ENCODE measurements at regions of chr12 and their contacts with region 1.

Region 1: GRCh38 chr12:65556681-65557437 is 267.4 kb upstream of the HMGA2 start:
- DNase-seq: peak; percentile 94
- H3K4me3 ChIP-seq: no peak overlapping the region
- H3K27ac ChIP-seq: peak overlapping the region; percentile 77
- H3K4me1 ChIP-seq: peaks cover 26% of the 10 kb centered on the region
- H3K27me3 ChIP-seq: no peaks in the 10 kb centered on the region
- CTCF ChIP-seq: peak; percentile 94 to 98

Region 2: DNA sequence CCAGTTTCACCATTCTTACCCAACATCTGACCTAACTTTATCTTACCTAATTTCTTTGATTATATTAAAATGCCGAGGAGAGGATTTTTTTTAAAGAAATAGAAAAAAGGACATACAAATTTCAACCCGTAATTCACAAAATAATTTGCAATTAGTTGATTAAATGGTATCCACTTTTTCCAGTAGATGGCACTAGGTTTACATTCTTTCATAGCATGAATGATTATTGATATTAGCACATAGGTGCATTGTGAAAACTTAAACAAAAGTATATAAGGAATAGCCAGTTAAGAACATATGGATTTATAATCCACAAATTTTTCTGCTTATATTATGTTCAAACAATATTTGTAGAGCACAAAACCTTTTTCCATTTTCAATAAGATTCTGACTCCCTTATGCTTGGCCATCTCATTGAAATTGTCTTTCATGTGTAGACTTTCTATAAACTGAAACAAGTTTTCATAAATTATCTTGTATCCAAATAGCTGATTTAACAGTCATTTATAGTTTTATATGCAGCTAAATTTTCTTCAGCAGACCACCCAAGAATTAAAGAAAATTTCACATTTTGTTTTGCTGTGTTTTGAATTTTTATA is 243.0 kb before region 1 on chr12:
- CTCF ChIA-PET with region 1: no interaction called
- dilution Hi-C with region 1: no loop called
- in situ Hi-C with region 1: no loop called
- intact Hi-C with region 1: loop called (anchors 1 kb)
- DNase-seq: peak; percentile 19
- H3K4me3 ChIP-seq: no peak overlapping the region
- H3K27ac ChIP-seq: peak overlapping the region; percentile 2
- H3K4me1 ChIP-seq: peaks cover 3% of the 10 kb centered on the region
- H3K27me3 ChIP-seq: no peaks in the 10 kb centered on the region
- CTCF ChIP-seq: peak; percentile 59 to 67

Region 3: GRCh38 chr12:65584016-65584415 is 27.2 kb after region 1 on chr12:
- CTCF ChIA-PET with region 1: no interaction called
- dilution Hi-C with region 1: no loop called
- in situ Hi-C with region 1: no loop called
- intact Hi-C with region 1: no loop called
- DNase-seq: no peak
- H3K4me3 ChIP-seq: no peak overlapping the region
- H3K27ac ChIP-seq: no peak overlapping the region
- H3K4me1 ChIP-seq: peaks cover 9% of the 10 kb centered on the region
- H3K27me3 ChIP-seq: no peaks in the 10 kb centered on the region
- CTCF ChIP-seq: no peak

Region 4: DNA sequence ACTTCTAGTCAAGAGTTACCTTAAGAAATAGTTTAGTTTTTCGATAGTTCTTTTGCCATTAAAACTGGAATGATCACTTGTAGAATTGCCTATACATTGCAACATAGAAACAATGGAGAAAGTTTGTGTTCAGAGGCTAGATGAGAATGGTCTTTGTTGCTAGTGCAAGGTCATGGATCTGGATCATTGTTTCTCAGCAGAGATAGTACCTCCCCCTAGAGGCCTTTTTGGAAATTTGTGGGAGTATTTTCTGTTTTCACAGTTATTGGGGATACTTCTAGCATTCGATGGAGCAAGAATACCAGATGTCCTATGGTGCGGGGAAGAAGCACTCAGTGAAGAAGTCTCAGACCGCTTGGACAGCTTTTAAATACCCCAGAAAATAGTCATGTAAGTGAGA is 128.7 kb after region 1 on chr12:
- CTCF ChIA-PET with region 1: no interaction called
- dilution Hi-C with region 1: no loop called
- in situ Hi-C with region 1: no loop called
- intact Hi-C with region 1: loop called (anchors 1 kb)
- DNase-seq: peak; percentile 48
- H3K4me3 ChIP-seq: no peak overlapping the region
- H3K27ac ChIP-seq: no peak overlapping the region
- H3K4me1 ChIP-seq: peaks cover 8% of the 10 kb centered on the region
- H3K27me3 ChIP-seq: no peaks in the 10 kb centered on the region
- CTCF ChIP-seq: peak; percentile 53 to 68

Region 5: DNA sequence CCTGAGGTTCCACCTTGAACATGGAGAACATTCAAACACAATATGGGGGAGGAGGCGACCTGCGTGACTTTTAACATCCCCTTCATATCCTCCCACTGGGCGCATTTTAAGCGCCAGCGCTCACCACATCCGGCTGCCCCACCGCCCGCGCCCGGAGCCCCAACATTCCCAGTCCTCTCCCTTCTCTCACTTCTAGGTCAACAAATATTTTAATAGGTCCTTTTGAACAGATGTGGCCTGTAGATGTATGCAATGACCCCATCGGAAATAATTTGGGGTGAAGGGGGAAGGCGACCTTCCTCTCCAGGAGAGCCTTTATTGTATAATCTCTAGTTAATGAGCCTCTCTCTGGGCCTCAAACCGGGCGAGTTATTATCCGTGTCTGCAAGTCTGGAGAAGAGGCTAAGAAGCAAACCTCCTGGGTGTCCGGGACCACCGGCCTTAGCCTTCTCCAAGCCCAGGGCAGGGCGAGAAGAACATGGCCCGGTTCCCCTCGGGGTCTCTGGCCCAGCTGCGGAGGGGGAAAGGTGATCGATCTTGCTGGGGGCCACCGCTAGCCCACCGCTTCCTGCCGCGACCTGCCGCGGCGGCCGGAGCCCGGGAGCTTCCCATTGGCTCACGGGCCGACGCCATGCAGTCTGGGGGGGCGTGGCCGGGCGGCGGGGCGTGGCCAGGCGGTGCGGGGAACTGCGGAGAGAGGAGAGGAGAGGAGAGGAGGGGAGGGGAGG is 184.2 kb after region 1 on chr12:
- CTCF ChIA-PET with region 1: no interaction called
- dilution Hi-C with region 1: no loop called
- in situ Hi-C with region 1: no loop called
- intact Hi-C with region 1: loop called (anchors 2 kb)
- DNase-seq: peak; percentile 73
- H3K4me3 ChIP-seq: peak overlapping the region; percentile 54 to 90 (median 77)
- H3K27ac ChIP-seq: peak overlapping the region; percentile 49
- H3K4me1 ChIP-seq: peaks cover 14% of the 10 kb centered on the region
- H3K27me3 ChIP-seq: no peaks in the 10 kb centered on the region
- CTCF ChIP-seq: no peak

Region 6: DNA sequence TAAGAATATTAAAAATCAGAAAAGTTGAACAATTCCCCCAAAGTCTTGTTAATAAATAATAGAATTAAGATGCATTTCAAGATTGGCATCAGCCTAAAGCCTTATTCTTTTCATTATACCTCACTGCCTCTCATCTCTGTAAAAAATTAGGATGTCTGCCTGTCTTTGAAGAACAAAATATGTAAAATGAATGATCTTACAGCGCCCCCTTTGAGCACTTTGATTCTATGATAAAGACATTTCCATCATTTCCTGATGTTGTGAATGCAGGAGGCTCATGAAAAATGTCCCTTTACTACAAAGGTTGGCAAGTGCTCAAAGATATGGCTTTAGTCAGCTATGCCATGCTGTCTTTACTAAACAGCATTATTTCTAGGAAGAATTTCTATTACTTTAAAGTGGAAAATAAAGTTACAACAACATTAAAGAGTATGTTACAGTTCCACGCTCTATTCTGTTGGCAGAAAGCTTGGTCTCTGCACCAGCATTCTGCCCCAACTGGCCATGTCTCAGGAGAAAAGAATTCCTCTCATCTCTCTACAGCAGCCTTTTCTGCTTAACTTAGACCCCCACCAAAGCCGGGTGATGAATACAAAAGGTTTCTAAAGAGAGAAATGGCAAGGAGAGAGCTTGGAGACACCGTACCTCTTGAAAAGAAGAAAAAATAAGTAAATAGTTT is 478.6 kb after region 1 on chr12:
- CTCF ChIA-PET with region 1: no interaction called
- dilution Hi-C with region 1: no loop called
- in situ Hi-C with region 1: no loop called
- intact Hi-C with region 1: loop called (anchors 1 kb)
- DNase-seq: peak; percentile 52
- H3K4me3 ChIP-seq: no peak overlapping the region
- H3K27ac ChIP-seq: peak overlapping the region; percentile 26
- H3K4me1 ChIP-seq: peaks cover 19% of the 10 kb centered on the region
- H3K27me3 ChIP-seq: no peaks in the 10 kb centered on the region
- CTCF ChIP-seq: peak; percentile 55 to 74

Measured in mammary epithelial cell (primary cell).